Vagina (tissue), 2 donors: ENCODE measurements at regions of chr15 and their contacts with region 1.

Region 1: GRCh38 chr15:41022487-41023090 is 69.3 kb downstream of the CHAC1 start:
- DNase-seq: no peak
- H3K4me3 ChIP-seq: no peak overlapping the region
- H3K27ac ChIP-seq: no peak overlapping the region
- H3K4me1 ChIP-seq: peaks cover 7% of the 10 kb centered on the region
- H3K27me3 ChIP-seq: no peaks in the 10 kb centered on the region
- CTCF ChIP-seq: peak; percentile 16 to 47 (median 44)
- POLR2A ChIP-seq: no peak

Region 2: GRCh38 chr15:40941528-40942336 is 80.9 kb before region 1 on chr15:
- intact Hi-C with region 1: loop called (anchors 10 kb)
- DNase-seq: no peak
- H3K4me3 ChIP-seq: peak overlapping the region; percentile 46 to 74
- H3K27ac ChIP-seq: peak overlapping the region; percentile 79
- H3K4me1 ChIP-seq: peaks cover 27% of the 10 kb centered on the region
- H3K27me3 ChIP-seq: no peaks in the 10 kb centered on the region
- CTCF ChIP-seq: peak in 2 of 3 experiments; percentile 16 to 56
- POLR2A ChIP-seq: no peak

Region 3: DNA sequence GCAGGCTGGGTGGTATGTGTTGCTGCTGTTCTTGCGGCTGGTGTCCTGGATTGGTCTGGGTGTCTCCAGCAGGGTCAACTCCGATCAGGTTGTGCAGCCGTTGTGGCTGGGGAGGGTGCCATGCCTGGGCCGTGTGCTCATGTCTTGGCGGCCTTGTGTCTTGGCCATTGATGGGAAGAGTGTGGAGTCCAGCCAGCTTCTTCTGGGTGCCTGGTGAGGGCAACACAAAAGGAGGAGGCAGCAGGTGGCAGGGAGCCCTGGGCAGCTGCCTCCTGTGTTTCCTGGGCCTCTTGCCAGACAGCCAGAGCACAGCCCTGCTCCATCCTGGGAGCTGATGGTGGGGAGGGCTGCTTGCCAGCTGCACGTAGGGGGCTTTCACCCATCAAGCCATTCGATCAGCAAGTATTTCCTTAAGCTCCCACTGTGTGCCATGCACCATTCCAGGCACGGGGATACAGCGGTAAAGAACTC is 65.0 kb before region 1 on chr15:
- intact Hi-C with region 1: no loop called
- DNase-seq: no peak
- H3K4me3 ChIP-seq: no peak overlapping the region
- H3K27ac ChIP-seq: no peak overlapping the region
- H3K4me1 ChIP-seq: peaks cover 14% of the 10 kb centered on the region
- H3K27me3 ChIP-seq: no peaks in the 10 kb centered on the region
- CTCF ChIP-seq: no peak
- POLR2A ChIP-seq: no peak

Region 4: GRCh38 chr15:41079717-41080116 is 57.1 kb after region 1 on chr15:
- intact Hi-C with region 1: no loop called
- DNase-seq: no peak
- H3K4me3 ChIP-seq: no peak overlapping the region
- H3K27ac ChIP-seq: no peak overlapping the region
- H3K4me1 ChIP-seq: no peaks in the 10 kb centered on the region
- H3K27me3 ChIP-seq: no peaks in the 10 kb centered on the region
- CTCF ChIP-seq: no peak
- POLR2A ChIP-seq: no peak

Region 5: DNA sequence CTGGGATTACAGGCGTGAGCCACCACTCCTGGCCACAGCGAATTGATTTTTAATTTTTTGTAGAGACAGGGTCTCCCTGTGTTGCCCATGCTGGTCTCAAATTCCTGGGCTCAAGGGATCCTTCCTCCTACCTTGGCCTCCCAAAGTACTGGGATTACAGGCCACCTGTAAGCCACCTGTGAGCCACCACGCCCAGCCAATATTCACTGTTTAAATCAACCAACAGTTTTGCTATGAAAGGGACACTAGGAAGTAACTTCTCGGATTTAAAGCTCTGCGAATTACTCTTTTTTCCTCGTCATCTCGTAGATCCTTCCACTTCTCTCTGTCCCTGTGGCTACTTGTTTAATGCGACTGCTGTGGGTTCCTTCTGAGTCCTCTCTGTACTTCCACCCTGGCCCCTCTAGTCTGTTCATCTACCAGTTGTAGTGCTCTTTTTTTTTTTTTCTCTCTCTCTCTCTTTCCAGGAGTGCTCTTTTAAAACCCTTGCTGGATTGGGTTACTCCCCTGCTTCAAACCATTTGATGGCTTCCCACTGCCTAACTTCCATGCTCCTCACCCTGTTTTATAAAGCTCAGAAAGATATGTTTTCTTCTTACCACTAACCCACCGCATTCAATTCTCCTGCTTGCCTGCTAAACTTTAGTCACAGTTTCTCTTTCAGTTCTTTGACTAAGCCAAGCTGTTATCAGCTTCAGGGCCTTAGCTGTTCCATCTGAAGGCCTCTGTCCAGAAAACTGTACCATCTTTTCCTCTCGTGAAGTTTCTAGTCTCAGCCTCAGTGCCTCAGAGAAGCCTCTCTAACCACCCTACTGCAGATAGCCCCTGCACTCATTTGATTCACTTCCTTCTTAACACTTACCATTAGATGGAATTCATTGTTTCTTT is 406.7 kb after region 1 on chr15:
- intact Hi-C with region 1: no loop called
- DNase-seq: no peak
- H3K4me3 ChIP-seq: no peak overlapping the region
- H3K27ac ChIP-seq: no peak overlapping the region
- H3K4me1 ChIP-seq: no peaks in the 10 kb centered on the region
- H3K27me3 ChIP-seq: no peaks in the 10 kb centered on the region
- CTCF ChIP-seq: no peak
- POLR2A ChIP-seq: no peak